WTC11 (cell line): ENCODE measurements at regions of chr14 and their contacts with region 1.

Region 1: DNA sequence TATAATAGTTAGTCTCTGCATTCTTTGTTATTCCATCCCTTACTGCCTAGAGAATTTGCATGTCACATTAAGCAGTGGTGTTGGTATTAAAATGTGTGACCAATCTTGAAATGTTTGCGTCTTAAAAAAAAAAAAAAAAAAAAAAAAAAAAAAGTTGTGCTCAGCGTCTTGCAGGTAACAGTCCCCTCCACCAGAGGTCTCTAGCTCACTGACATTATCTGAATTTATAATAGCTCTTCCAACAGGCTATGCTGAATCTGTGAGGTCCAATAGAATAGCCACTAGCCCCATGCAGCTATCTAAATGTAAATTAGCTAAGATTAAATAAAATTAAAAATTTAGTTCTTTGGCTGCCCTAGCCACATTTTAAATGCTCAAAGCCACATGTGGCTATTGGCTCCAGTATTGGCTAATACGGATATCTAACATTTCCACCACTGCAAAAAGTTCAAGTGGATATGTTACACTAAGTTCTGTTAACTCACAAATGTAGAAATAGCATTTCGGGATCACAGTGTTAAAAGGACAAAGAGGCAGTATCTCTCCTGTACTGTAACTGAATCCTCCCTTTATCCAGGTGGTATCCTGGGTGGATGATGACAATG is 28.7 kb downstream of the NKX2-8 start:
- DNase-seq: no peak
- ATAC-seq: peak; percentile 79
- H3K4me3 Mint-ChIP-seq: no peak overlapping the region
- H3K27ac Mint-ChIP-seq: no peak overlapping the region
- H3K4me1 Mint-ChIP-seq: peaks cover 14% of the 10 kb centered on the region
- H3K27me3 Mint-ChIP-seq: peaks cover 3% of the 10 kb centered on the region; the same call in 1 of the 2 replicates
- CTCF ChIP-seq: peak; percentile 27; the same call in 1 of the 2 replicates

Region 2: GRCh38 chr14:36442824-36443241 is 110.9 kb before region 1 on chr14:
- CTCF ChIA-PET with region 1: interaction called, 11 read pairs
- POLR2A ChIA-PET with region 1: no interaction called
- DNase-seq: no peak
- ATAC-seq: peak; percentile 95
- H3K4me3 Mint-ChIP-seq: peak overlapping the region; percentile 39
- H3K27ac Mint-ChIP-seq: no peak overlapping the region
- H3K4me1 Mint-ChIP-seq: peaks cover 48% of the 10 kb centered on the region
- H3K27me3 Mint-ChIP-seq: peaks cover 95% of the 10 kb centered on the region
- CTCF ChIP-seq: no peak

Region 3: DNA sequence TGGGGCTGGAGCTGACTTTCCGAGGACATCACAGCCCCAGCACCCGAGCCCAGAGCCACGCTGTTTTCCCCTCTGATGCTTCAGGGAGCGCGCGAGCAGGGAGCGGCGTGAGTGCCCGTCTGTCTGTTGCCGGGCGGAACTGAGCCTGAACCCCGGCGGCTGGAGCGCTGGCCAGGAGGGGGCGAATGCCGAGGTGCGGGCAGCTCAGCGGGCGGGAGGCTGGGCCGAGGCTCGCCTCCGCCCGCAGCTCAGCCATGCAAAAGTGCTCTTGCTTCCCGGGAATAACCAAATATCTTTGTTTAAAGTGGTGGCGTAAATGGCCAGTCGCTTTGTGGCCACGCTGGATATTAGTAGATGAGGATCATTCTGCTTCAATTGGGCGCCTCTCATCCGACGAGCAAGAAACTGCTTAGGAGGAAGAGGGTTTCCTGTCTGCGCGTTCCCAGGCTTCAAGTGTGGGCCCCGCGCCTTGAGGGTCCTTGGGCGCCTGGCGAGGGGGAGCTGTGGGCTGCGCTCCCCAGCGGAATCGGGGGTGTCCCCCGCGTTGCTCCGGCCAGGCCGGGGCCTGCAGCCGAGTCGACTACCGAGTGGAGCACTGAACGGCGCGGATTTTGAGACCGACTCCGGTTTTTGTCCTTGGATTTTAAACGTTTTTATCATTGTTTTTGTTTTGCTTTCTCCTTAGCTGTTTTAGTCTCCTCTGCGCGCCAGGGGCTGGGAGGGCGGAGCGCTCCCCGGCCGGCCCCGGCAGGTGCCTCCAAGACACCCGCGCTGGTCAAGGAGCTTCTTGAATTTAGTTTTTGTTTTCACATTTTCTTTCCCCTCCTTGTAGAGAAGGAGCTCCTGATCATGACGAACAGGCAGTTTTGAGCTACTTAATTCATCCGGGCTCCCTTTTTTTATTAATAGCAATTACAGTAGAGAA is 32.9 kb before region 1 on chr14:
- CTCF ChIA-PET with region 1: interaction called, 159 read pairs
- POLR2A ChIA-PET with region 1: no interaction called
- DNase-seq: peak; percentile 73
- ATAC-seq: peak; percentile 7
- H3K4me3 Mint-ChIP-seq: peak overlapping the region; percentile 59
- H3K27ac Mint-ChIP-seq: no peak overlapping the region
- H3K4me1 Mint-ChIP-seq: peaks cover 34% of the 10 kb centered on the region
- H3K27me3 Mint-ChIP-seq: peaks cover 98% of the 10 kb centered on the region
- CTCF ChIP-seq: no peak

Region 4: GRCh38 chr14:36591482-36591881 is 37.7 kb after region 1 on chr14:
- CTCF ChIA-PET with region 1: interaction called, 14 read pairs
- POLR2A ChIA-PET with region 1: no interaction called
- DNase-seq: no peak
- ATAC-seq: no peak
- H3K4me3 Mint-ChIP-seq: no peak overlapping the region
- H3K27ac Mint-ChIP-seq: no peak overlapping the region
- H3K4me1 Mint-ChIP-seq: peaks cover 8% of the 10 kb centered on the region
- H3K27me3 Mint-ChIP-seq: peaks cover 29% of the 10 kb centered on the region
- CTCF ChIP-seq: no peak

Region 5: DNA sequence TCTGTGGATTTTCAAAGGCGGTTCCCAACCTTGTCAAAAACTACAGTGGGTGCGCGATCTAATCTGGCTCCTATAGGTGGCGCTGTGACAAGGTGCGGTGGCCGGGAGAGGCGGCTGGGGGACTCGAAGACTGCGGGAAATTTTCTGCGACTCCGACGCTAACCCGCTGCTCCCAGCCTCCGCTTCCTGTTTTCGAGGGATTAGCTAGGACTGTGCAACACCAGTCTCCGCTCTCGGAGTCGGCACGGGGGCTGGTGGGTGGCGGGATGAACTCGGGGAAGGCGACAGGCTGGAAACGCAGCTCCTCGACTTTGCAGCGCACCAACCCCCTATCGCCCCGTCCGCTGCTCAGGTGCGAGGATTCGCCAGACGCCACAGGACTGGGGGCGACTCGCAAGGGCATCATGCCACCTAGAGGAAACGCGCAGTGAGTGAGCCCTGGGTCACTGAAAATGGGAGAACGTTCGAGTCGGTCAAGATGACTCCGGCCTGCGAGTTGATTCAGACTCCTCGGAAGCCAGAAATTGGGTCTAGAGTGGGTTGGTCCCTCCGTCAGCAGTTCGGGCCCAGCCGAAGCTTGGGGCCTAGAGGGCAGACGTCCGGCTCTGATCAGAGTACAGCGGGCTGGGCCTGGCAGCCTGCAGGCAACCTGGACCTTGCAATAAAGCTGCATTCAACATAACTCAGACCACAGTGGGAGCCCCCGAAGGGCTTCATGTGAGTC is 102.4 kb after region 1 on chr14:
- CTCF ChIA-PET with region 1: interaction called, 18 read pairs
- POLR2A ChIA-PET with region 1: no interaction called
- DNase-seq: peak; percentile 84
- ATAC-seq: peak; percentile 43
- H3K4me3 Mint-ChIP-seq: peak overlapping the region; percentile 55
- H3K27ac Mint-ChIP-seq: no peak overlapping the region
- H3K4me1 Mint-ChIP-seq: peaks cover 48% of the 10 kb centered on the region
- H3K27me3 Mint-ChIP-seq: peaks cover 100% of the 10 kb centered on the region
- CTCF ChIP-seq: peak; percentile 88